Heart left ventricle (tissue), 16 donors: ENCODE measurements at regions of chr1 and their contacts with region 1.

Region 1: GRCh38 chr1:55215256-55216021 is at the start of gene USP24:
- DNase-seq: peak; percentile 81 to 92 (median 83)
- ATAC-seq: peak; percentile 56 to 95 (median 92)
- H3K4me3 ChIP-seq: peak within 1 kb of the TSS; percentile 80 to 96 (median 90)
- H3K27ac ChIP-seq: peak within 1 kb of the TSS; percentile 95 to 99 (median 99)
- H3K4me1 ChIP-seq: peaks cover 13 to 65% (median 51%) of the 10 kb centered on the region in 12 donors
- H3K27me3 ChIP-seq: no peaks in the 10 kb centered on the region
- CTCF ChIP-seq: no peak
- POLR2A ChIP-seq: peak in 1 of 2 donors; percentile 85
- total RNA-seq, gene USP24: 26.3 to 53.7 (median 36.8) TPM

Region 2: DNA sequence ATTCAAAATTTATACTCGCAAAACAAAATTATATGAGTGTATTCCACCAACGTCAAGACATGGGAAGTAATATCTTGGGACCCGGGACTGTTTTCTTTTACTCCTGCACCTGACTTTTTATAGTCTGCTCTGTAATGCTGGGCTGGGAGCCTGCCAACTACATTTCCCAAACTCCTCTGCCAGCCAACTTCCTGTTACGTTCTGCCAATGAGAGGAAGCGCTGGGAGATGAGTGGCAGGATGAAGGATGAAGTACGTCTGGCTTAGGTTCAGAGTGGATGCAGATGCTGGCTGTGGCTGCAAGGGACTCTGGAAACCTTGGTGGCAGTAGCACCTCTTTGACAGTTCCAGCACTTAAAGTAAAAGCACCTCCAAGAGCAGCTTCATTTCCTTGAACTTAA is 59.9 kb before region 1 on chr1:
- intact Hi-C with region 1: loop called in 1 of 10 experiments (anchors 10 kb)
- DNase-seq: peak; percentile 60 to 81 (median 71)
- ATAC-seq: peak; percentile 75 to 94 (median 91)
- H3K4me3 ChIP-seq: no peak overlapping the region
- H3K27ac ChIP-seq: no peak overlapping the region
- H3K4me1 ChIP-seq: peaks cover 0 to 24% (median 0%) of the 10 kb centered on the region in 12 donors
- H3K27me3 ChIP-seq: no peaks in the 10 kb centered on the region
- CTCF ChIP-seq: no peak
- POLR2A ChIP-seq: no peak

Region 3: GRCh38 chr1:55164906-55165305 is 50.5 kb before region 1 on chr1:
- intact Hi-C with region 1: loop called in 4 of 10 experiments (anchors 5 kb)
- DNase-seq: no peak
- ATAC-seq: no peak
- H3K4me3 ChIP-seq: no peak overlapping the region
- H3K27ac ChIP-seq: no peak overlapping the region
- H3K4me1 ChIP-seq: peaks cover 0 to 19% (median 0%) of the 10 kb centered on the region in 12 donors
- H3K27me3 ChIP-seq: no peaks in the 10 kb centered on the region
- CTCF ChIP-seq: no peak
- POLR2A ChIP-seq: no peak

Region 4: DNA sequence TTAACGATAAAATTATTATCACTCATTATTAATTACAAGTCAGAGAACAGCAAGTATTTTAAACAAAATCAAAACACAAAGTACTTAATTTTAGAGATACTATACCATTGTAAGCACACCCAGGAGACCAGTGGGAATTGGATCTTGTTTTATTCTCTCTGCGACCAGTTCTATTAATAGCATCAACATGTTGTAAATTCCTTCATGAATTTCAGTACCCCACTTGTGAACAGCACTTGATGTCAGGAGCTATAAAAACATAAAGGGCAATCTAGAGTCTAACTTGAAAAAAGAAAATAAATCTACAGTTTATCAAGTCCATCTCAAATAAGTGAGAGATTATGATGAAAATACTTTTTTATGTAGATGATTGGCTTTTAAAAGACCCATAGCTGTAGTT is 43.2 kb before region 1 on chr1:
- intact Hi-C with region 1: loop called in 4 of 10 experiments (anchors 5 kb)
- DNase-seq: no peak
- ATAC-seq: peak in 3 of 4 donors; percentile 55 to 73 (median 55)
- H3K4me3 ChIP-seq: no peak overlapping the region
- H3K27ac ChIP-seq: peak overlapping the region in 2 of 12 donors; percentile 6 to 42
- H3K4me1 ChIP-seq: peaks cover 0 to 45% (median 9%) of the 10 kb centered on the region in 12 donors
- H3K27me3 ChIP-seq: no peaks in the 10 kb centered on the region
- CTCF ChIP-seq: no peak
- POLR2A ChIP-seq: no peak

Region 5: DNA sequence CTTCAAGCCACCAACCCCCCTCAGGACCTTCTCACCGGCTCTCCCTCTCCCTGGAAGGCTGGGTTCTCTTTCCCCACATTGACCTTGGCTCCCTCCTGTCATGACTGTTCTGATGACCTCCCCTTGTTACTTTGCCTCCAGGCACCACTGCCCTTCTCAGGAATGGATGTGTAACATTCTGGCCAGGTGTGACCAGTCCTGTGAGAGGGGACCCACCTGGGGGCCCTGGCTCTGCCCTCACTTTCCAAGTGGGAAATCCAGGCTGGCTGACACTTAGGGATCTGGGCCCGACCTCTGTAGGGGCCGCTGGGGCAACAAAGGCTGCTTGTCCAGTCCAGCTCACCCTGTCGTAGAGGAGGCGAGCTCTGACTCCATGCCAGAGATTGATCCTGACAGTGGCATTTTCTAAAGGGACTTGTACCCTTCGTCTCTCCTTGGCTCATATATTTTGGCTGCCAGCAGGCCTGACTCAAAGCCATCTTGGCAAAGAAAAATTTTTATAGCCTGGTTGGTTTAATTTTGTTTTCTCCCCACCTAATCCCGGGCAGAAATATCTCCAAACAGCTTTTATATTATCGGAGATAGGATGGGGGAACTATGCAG is 37.6 kb after region 1 on chr1:
- intact Hi-C with region 1: no loop called
- DNase-seq: peak in 1 of 5 donors; percentile 38
- ATAC-seq: peak in 2 of 4 donors; percentile 33 to 59
- H3K4me3 ChIP-seq: no peak overlapping the region
- H3K27ac ChIP-seq: peak overlapping the region in 8 of 12 donors; percentile 20 to 89 (median 56)
- H3K4me1 ChIP-seq: peaks cover 0 to 29% (median 10%) of the 10 kb centered on the region in 12 donors
- H3K27me3 ChIP-seq: no peaks in the 10 kb centered on the region
- CTCF ChIP-seq: no peak
- POLR2A ChIP-seq: no peak

Region 6: DNA sequence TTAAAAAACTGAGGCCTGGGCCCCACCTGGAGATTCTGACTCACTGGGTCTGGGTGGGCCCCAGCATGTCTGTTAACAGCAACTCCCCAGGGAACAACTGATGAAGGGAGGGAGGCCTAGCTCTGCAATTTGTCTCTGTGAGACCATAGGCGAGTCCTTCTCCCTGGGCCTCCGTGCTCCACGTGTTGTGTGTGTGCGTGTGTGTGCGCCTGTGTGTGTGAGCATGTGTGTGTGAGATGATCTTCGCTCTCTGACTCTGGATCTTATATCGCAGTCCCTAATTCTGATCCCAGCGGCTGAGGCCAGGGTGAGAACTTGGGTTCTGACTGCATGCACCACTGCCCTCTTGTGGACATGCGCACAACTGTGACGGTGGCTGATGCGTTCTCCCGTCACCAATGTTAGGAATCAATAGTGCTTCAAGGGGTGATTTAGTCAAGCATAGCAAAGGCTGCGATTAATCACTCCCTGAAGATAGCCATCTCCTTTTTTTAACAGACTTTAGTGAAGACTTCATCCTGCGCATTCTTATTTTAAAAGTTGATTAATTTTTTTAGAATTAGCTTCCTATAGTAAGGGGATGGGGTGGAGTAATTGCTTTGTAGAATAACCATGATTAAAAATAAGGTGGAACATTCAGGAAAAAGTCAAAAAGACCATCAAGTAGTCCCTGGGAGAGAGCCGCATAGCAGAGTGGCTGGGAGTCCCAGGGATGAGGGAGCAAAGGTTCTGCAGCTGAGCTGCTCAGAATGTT is 62.1 kb after region 1 on chr1:
- intact Hi-C with region 1: loop called in 7 of 10 experiments (anchors 2 to 10 kb)
- DNase-seq: peak; percentile 76 to 88 (median 81)
- ATAC-seq: peak; percentile 74 to 92 (median 92)
- H3K4me3 ChIP-seq: no peak overlapping the region
- H3K27ac ChIP-seq: peak overlapping the region in 2 of 12 donors; percentile 12 to 61
- H3K4me1 ChIP-seq: peaks cover 0 to 24% (median 9%) of the 10 kb centered on the region in 12 donors
- H3K27me3 ChIP-seq: no peaks in the 10 kb centered on the region
- CTCF ChIP-seq: peak; percentile 70 to 91 (median 82)
- POLR2A ChIP-seq: no peak